ENCODE measurements at regions of chr18 and their contacts with region 1.

Region 1: GRCh38 chr18:13726232-13726971 is at the starts of genes FAM210A and RNMT:
- DNase-seq: peak; percentile 96
- H3K4me3 Mint-ChIP-seq: peak within 1 kb of the TSS; percentile 83
- H3K27ac Mint-ChIP-seq: peak within 1 kb of the TSS; percentile 89
- H3K4me1 Mint-ChIP-seq: peaks cover 61% of the 10 kb centered on the region
- H3K27me3 Mint-ChIP-seq: no peaks in the 10 kb centered on the region
- total RNA-seq, gene FAM210A: 24.9 to 29.4 TPM
- total RNA-seq, gene RNMT: 41.2 to 43.6 TPM

Region 2: DNA sequence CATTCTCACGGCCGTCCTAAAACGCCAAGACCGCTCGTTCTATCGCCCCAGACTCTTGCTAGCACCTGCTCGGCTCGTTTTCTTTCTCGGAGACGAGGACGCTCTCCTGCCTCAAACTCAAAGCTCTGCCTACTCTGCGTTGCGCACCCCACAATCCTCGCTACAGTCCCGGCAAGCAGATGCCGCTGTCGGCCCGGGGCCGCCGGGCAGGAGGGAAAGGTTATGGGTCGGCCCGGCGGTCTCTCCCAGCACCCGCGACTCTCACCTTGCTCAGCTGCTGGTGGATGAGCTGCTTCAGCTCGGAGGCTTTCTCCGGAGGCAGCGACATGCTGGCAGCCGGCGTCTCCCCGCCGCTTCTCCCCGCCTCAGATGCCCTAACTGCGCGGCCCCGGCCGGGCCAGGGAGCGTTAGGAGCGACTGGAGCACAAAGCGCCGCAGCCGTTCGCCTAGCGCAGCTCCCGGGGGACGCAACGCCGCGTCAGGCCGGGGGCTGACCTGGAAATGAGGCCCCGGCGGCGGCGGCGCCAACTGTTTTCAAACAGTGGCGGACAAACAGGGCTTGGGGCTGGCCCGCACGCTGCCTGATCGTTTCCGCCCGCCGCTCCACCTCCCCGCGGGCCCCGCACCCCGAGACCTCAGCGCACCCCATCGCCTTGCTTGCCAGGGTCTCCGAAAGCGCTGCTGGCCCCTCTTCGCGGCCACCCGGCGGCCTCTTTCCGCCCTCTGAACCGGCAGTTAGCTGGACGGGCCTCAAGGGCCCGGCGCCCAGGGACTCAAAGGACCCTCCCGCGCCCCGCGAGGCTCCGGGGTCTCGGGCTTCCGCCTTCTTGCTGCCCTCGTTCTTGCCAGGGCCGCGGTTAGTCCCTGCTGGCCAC is 1023.9 kb before region 1 on chr18 and contains the starts of genes CEP76 and PSMG2:
- CTCF ChIA-PET with region 1: no interaction called
- POLR2A ChIA-PET with region 1: no interaction called
- intact Hi-C with region 1: loop called (anchors 5 kb)
- DNase-seq: peak; percentile 88
- H3K4me3 Mint-ChIP-seq: peak within 1 kb of the TSS; percentile 96
- H3K27ac Mint-ChIP-seq: peak within 1 kb of the TSS; percentile 98
- H3K4me1 Mint-ChIP-seq: peaks cover 35% of the 10 kb centered on the region
- H3K27me3 Mint-ChIP-seq: no peaks in the 10 kb centered on the region
- total RNA-seq, gene CEP76: 14.4 to 15.0 TPM
- total RNA-seq, gene PSMG2: 112 to 119 TPM

Region 3: DNA sequence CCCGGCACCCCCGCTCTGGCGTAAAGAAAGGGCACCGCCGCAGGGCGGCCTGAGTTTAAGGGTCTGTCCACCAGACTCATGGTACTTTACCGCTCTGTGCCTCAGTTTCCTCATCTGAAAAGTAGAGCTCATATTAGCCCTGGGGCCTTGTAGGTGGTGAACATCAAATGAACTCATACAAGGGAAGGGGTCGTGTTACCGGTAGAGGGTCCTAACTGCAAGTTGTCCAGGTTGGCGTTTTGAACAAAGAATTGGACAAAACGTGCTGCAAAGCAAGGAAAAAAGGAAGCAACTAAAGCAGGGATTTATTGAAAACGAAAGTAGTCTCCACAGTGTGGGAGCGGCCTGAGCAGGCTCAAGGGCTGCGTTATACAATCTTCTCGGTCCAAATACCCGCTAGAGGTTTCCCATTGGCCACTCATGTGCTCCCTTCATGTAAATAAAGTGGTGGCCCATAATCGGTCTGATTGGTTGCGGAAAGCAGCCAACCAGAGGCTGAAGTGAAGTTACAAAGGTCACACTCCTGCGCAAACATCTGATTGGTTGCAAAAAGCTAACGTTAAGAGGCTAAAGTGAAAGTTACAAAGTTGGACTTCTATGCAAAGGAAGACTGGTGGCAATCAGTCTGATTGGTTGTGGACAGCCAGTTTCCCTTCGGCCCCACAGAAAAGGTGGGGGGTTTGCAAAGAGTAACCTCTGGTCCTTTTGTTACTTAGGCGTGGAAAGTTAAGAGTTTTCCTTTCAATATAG is 588.6 kb before region 1 on chr18:
- CTCF ChIA-PET with region 1: no interaction called
- POLR2A ChIA-PET with region 1: no interaction called
- intact Hi-C with region 1: loop called (anchors 10 kb)
- DNase-seq: peak; percentile 81
- H3K4me3 Mint-ChIP-seq: peak overlapping the region; percentile 88
- H3K27ac Mint-ChIP-seq: peak overlapping the region; percentile 69
- H3K4me1 Mint-ChIP-seq: peaks cover 26% of the 10 kb centered on the region
- H3K27me3 Mint-ChIP-seq: no peaks in the 10 kb centered on the region

Region 4: GRCh38 chr18:13539050-13539449 is 187.4 kb before region 1 on chr18:
- CTCF ChIA-PET with region 1: no interaction called
- POLR2A ChIA-PET with region 1: no interaction called
- intact Hi-C with region 1: no loop called
- DNase-seq: no peak
- H3K4me3 Mint-ChIP-seq: no peak overlapping the region
- H3K27ac Mint-ChIP-seq: peak overlapping the region; percentile 20
- H3K4me1 Mint-ChIP-seq: peaks cover 47% of the 10 kb centered on the region
- H3K27me3 Mint-ChIP-seq: no peaks in the 10 kb centered on the region

Region 5: DNA sequence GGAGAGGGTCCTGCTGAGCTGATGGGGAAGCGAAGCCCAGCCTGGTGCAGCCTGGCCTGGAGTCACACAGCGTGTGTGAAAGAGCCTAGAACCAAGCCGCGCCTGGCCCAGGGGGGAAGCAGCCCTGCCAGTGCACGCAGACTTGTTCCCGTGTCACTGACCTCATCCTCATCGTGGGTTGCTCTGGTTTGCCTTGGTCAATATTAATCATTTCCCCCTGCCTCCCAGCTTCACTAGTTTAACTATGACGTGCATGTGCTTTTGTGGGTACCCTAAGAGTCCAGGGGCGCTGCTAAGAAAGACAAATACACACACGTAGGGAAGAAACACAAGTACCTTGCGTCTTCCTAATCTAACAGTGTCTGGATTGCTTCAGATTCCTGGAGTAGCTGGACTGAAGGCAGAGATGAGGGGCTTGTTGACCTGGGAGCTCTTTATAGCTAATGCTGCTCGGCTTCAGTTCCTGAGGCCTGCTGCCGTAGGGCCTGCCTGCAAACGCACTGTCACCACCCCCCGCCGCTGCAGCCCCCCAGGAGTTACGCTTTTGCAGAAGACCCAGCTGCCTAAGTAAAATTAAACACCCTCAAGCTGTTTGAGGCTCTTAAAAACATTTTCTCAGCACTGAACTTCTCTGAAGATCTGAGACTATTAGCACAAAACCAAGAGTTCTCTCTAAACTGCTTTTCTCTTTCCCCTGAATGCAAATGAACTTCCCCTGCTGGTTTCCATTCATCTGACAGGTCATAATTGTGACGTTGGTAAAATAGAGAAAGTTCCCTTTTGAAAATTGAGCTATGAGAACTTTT is 159.3 kb before region 1 on chr18:
- CTCF ChIA-PET with region 1: interaction called, 6 read pairs
- POLR2A ChIA-PET with region 1: interaction called, 13 read pairs
- intact Hi-C with region 1: loop called (anchors 2 kb)
- DNase-seq: peak; percentile 65
- H3K4me3 Mint-ChIP-seq: peak overlapping the region; percentile 60
- H3K27ac Mint-ChIP-seq: peak overlapping the region; percentile 89
- H3K4me1 Mint-ChIP-seq: peaks cover 74% of the 10 kb centered on the region
- H3K27me3 Mint-ChIP-seq: no peaks in the 10 kb centered on the region

Region 6: DNA sequence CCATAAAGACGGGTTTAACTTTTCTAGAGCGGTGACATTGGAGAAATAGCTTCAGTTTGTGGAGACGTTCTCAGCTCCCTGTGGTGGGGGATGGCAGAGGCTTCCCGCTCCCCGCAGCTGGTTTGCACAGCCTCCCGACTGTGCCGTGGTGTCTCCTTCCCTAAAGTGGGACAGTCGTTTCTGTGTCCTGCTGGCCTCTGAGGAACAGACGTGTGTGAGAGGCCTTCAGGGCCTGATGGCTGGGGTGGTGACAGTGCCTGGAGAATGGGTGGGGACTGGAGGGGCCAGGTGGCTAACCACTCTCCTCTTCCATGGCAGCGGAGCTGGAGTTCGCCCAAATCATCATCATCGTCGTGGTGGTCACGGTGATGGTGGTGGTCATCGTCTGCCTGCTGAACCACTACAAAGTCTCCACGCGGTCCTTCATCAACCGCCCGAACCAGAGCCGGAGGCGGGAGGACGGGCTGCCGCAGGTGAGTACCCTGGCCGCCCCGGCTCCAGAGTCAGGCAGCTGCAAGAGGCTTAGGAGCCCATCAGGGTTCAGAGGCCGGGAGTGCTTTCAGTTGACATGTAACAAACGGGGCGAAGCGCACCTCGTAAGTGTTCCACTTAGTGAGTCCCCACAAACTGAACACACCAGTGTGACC is 105.5 kb before region 1 on chr18:
- CTCF ChIA-PET with region 1: no interaction called
- POLR2A ChIA-PET with region 1: no interaction called
- intact Hi-C with region 1: no loop called
- DNase-seq: no peak
- H3K4me3 Mint-ChIP-seq: no peak overlapping the region
- H3K27ac Mint-ChIP-seq: no peak overlapping the region
- H3K4me1 Mint-ChIP-seq: peaks cover 25% of the 10 kb centered on the region
- H3K27me3 Mint-ChIP-seq: no peaks in the 10 kb centered on the region